Prostate gland (tissue), 2 donors: ENCODE measurements at regions of chr3 and their contacts with region 1.

Region 1: GRCh38 chr3:107064445-107065060 is 312.7 kb upstream of the CCDC54 start:
- DNase-seq: peak; percentile 64
- H3K4me3 ChIP-seq: no peak overlapping the region
- H3K27ac ChIP-seq: no peak overlapping the region
- H3K4me1 ChIP-seq: no peaks in the 10 kb centered on the region
- H3K27me3 ChIP-seq: no peaks in the 10 kb centered on the region
- CTCF ChIP-seq: peak; percentile 45 to 67 (median 63)
- POLR2A ChIP-seq: no peak

Region 2: DNA sequence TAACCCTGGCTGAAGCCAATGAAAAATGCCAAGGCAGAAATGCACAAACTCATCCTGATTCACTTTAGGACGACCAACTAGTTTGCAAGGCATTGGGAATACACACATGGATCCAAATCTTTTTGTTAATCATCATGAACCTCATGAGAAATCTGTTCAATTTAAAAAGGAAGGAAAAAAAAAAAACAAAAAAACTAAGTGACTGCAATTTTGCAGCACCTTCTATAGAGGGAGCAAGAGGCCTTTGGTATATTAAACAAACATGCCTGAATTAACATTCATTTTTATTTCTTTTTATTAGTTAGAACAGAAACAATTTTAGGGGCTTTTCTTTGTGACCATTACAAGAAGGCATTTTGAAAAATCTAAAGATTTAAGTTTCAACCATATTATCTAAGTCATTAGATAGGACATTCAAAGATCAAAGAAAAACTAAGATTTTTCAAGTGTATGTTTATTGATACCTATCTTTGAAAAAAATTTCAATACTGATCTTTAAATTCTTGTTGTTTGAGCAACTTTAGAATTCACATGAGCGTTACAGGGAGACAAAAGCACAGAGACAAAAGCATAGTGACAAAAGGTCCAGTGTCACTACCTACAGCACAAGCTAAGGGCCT is 1378.2 kb before region 1 on chr3:
- intact Hi-C with region 1: loop called (anchors 10 kb)
- DNase-seq: no peak
- H3K4me3 ChIP-seq: no peak overlapping the region
- H3K27ac ChIP-seq: no peak overlapping the region
- H3K4me1 ChIP-seq: no peaks in the 10 kb centered on the region
- H3K27me3 ChIP-seq: no peaks in the 10 kb centered on the region
- CTCF ChIP-seq: peak; percentile 32 to 54 (median 38)
- POLR2A ChIP-seq: no peak

Region 3: DNA sequence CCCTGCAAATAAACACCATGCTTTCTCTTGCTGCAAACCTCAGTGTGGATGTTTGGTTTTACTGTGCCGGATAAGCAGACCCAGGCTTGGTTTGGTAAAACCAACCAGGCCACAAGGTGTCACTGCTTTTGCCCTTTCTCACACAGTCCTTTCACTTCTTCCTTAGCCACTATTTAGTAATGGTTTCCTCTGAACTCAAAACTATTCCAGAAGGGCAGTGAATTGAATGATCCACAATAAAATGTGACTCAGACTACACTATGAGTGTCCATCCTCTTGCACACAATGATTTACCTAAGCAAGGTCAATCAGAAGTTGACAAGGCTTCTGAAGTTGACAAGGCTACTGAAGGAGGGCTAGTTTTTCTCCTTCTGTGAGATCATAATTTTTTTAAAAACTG is 239.7 kb before region 1 on chr3:
- intact Hi-C with region 1: loop called (anchors 5 kb)
- DNase-seq: no peak
- H3K4me3 ChIP-seq: no peak overlapping the region
- H3K27ac ChIP-seq: no peak overlapping the region
- H3K4me1 ChIP-seq: no peaks in the 10 kb centered on the region
- H3K27me3 ChIP-seq: no peaks in the 10 kb centered on the region
- CTCF ChIP-seq: no peak
- POLR2A ChIP-seq: no peak

Region 4: GRCh38 chr3:107346564-107346963 is 282.0 kb after region 1 on chr3:
- intact Hi-C with region 1: no loop called
- DNase-seq: no peak
- H3K4me3 ChIP-seq: no peak overlapping the region
- H3K27ac ChIP-seq: no peak overlapping the region
- H3K4me1 ChIP-seq: no peaks in the 10 kb centered on the region
- H3K27me3 ChIP-seq: no peaks in the 10 kb centered on the region
- CTCF ChIP-seq: no peak
- POLR2A ChIP-seq: no peak